Sigmoid colon (tissue), 7 donors: ENCODE measurements at regions of chr15 and their contacts with region 1.

Region 1: DNA sequence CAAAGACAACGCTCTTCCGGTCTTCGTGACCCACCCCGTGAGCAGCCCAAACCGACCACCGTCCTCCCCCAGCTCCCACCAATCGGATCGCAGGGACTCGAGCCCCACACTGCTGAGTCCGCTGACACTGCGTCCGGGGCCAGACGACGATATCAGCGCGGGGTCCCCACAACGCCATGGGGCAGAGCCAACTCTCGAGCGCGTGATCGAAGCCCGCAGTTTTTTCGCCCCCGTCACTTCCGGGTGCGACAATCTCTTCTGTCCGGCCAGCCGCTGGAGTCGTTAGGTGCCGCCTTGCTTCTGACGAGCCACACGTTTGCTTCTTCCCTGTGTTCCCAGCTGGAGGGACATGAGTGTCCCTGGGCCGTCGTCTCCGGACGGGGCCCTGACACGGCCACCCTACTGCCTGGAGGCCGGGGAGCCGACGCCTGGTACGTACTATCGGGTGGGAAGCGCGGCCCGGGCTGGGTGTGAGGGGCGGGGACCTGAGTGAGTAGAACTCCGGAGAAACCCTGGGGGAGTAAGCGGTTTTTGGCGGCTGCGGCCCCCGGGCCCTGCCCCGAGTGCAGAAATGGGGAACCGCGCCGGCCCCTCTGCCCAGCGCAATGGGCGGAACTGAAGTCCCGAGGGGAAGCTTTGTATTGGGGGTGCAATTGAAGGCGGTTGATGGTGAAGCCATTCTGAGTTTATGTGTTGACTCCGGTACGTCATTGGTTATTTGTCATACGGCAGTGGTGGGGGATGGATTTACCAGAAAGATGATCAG is at the start of gene BLOC1S6:
- DNase-seq: peak; percentile 95
- H3K4me3 ChIP-seq: peak within 1 kb of the TSS; percentile 79 to 96 (median 88)
- H3K27ac ChIP-seq: peak within 1 kb of the TSS; percentile 94 to 99 (median 99)
- H3K4me1 ChIP-seq: peaks cover 0 to 50% (median 33%) of the 10 kb centered on the region in 4 donors
- H3K27me3 ChIP-seq: no peaks in the 10 kb centered on the region
- CTCF ChIP-seq: no peak
- EP300 ChIP-seq: peak in 1 of 4 donors; percentile 32
- POLR2A ChIP-seq: peak; percentile 63 to 66
- total RNA-seq, gene BLOC1S6: 40.2 to 89.1 (median 74.7) TPM

Region 2: DNA sequence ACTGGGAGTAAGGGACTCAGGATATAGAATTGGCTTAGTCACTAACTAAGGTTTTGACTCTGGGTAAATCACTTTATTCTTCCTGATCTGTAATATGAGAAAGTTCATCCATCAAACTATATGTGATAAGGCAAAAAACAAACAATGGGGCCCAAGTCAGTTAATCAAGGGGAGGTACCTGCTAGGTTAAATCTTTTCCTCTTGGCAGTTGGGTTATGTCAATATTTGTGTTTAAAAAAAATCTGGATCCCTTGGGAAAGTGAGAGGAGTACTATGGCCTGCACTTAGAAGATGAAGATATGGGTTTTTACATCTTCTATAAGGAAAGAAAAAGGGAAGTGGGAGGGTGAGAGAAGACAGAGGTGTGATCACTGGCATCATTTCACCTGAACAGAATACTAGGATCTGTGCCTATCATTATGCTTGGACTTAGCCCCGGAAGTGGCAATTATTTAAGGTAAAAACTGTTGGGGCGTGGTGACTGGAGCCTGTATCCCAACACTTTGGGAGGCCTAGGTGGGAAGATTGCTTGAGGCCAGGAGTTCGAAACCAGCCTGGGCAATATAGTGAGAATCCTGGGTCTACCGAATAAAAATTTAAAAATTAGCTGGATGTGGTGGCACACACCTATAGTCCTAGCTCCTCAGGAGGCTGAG is 338.0 kb before region 1 on chr15:
- intact Hi-C with region 1: no loop called
- DNase-seq: no peak
- H3K4me3 ChIP-seq: no peak overlapping the region
- H3K27ac ChIP-seq: no peak overlapping the region
- H3K4me1 ChIP-seq: no peaks in the 10 kb centered on the region
- H3K27me3 ChIP-seq: no peaks in the 10 kb centered on the region
- CTCF ChIP-seq: no peak
- EP300 ChIP-seq: no peak
- POLR2A ChIP-seq: no peak

Region 3: DNA sequence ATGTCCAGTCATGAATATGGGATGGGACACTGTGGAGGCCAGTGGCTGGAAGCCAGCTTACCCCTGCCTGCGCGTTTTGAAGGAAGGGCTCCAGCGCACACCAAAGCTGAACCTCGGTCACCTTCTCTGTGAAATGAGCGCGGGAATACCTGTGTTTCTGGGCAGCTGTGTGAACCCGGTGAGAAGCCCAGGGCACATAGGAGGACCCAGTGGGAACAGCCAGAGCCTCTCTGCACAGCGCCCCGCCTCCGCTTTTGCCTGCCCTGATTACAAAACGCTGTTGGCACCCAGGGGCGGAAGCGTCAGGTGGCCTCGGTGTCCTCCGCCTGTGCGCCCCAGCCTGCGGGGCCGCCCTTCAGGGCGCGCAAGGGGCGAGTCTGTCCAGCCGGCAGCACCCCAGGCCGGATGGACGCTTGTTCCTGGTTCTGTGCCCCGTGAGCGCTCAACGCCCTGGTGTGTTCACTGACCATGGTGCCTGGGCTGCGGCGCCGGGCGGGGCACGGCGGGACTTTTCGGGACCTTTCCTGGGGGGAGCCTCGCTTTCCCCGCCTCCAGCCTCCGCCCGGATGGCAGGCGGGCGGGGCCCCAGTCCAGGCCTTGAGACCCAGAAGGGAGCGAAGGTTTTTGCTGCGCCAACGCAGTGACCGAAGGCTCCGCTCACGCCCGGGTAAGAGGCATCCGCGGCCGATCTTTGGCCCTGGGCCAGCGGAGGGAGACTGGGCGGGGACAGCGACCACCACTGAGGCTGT is 47.3 kb after region 1 on chr15 and contains the start of gene SQOR:
- intact Hi-C with region 1: loop called (anchors 2 kb)
- DNase-seq: peak; percentile 95
- H3K4me3 ChIP-seq: peak within 1 kb of the TSS; percentile 55 to 82 (median 62)
- H3K27ac ChIP-seq: peak within 1 kb of the TSS; percentile 89 to 95 (median 94)
- H3K4me1 ChIP-seq: peaks cover 0 to 44% (median 32%) of the 10 kb centered on the region in 4 donors
- H3K27me3 ChIP-seq: no peaks in the 10 kb centered on the region
- CTCF ChIP-seq: no peak
- EP300 ChIP-seq: no peak
- POLR2A ChIP-seq: peak in 1 of 2 donors; percentile 80
- total RNA-seq, gene SQOR: 60.4 to 83.4 (median 67.7) TPM